Activated CD4-positive, alpha-beta T cell treated with anti-CD3 and anti-CD28 coated beads, Interleukin-2, amount 10 ng/mL, durations not matched to agents 24 days and 14 days (primary cell): ENCODE measurements at regions of chr9 and their contacts with region 1.

Region 1: GRCh38 chr9:2053883-2054845 is 39.0 kb downstream of the SMARCA2 start:
- DNase-seq: peak; percentile 92
- H3K4me3 Mint-ChIP-seq: peak overlapping the region; percentile 61
- H3K27ac Mint-ChIP-seq: peak overlapping the region; percentile 50
- H3K4me1 Mint-ChIP-seq: peaks cover 28% of the 10 kb centered on the region
- H3K27me3 Mint-ChIP-seq: no peaks in the 10 kb centered on the region

Region 2: DNA sequence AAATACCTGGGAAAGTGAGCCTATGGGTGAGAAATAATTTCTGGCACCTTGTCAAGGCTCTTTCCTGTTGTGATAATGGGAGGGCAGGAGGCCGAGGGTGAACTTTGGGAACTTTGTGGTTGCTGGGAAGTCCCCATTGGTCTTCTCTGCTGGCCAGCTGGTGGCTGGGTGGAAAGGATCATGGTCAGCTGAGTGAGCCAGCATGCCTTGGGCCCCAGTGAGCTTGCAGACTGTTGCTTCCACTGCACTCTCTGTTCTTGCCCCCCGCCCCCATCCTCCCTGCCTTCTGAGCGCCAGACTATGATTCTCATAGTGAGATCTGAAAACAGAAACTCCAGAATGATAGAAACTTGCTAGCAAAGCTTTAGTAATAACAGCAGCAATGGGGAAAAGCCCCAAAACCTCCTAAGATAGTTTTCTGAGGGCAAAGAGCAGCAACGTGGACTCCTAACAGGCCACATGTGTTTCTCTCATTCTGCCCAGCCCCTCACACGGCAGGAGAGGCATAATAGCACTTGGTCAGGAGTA is 178.2 kb before region 1 on chr9:
- intact Hi-C with region 1: loop called (anchors 1 kb)
- DNase-seq: peak; percentile 62
- H3K4me3 Mint-ChIP-seq: no peak overlapping the region
- H3K27ac Mint-ChIP-seq: peak overlapping the region; percentile 39
- H3K4me1 Mint-ChIP-seq: peaks cover 12% of the 10 kb centered on the region
- H3K27me3 Mint-ChIP-seq: peaks cover 14% of the 10 kb centered on the region

Region 3: DNA sequence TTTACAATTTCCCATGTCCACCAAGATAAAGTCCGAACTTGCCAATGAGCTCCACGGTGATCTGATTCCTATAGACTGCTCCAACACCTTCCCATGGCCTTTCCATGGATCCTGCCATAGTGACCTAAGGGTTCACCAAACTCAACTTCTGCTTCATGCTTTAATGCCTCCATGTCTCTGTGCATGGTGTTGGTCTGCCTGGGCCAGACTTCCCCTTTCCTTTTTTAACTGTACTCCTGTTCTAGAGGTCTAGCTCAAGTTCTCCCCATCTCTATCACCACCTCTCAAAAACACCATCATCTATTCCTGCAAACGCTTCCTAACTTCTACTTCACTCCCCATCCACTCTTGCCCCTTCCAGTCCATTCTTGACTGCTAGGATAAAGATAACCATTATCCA is 53.9 kb before region 1 on chr9:
- intact Hi-C with region 1: no loop called
- DNase-seq: no peak
- H3K4me3 Mint-ChIP-seq: no peak overlapping the region
- H3K27ac Mint-ChIP-seq: no peak overlapping the region
- H3K4me1 Mint-ChIP-seq: peaks cover 4% of the 10 kb centered on the region
- H3K27me3 Mint-ChIP-seq: peaks cover 35% of the 10 kb centered on the region

Region 4: DNA sequence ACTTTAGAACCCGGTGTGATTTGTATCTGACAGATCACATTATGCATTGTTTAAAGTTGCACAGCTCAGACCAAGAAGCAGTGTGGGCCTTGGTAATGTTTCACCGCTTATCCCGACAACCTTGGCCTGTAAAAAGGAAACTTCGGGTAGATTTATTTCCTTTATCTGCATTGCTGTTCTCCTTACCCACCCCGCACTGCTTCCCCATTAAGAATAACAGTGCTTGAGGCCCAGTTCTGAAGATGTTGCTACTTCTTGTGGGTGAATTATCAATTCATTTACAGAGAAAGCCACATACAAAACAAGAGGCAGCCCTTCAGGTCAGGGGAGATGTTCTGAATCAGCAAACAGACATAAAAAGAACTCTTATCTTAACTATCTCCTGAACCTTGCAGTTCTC is 30.6 kb before region 1 on chr9:
- intact Hi-C with region 1: loop called (anchors 1 kb)
- DNase-seq: peak; percentile 67
- H3K4me3 Mint-ChIP-seq: peak overlapping the region; percentile 78
- H3K27ac Mint-ChIP-seq: peak overlapping the region; percentile 86
- H3K4me1 Mint-ChIP-seq: peaks cover 85% of the 10 kb centered on the region
- H3K27me3 Mint-ChIP-seq: no peaks in the 10 kb centered on the region

Region 5: GRCh38 chr9:2036844-2037590 is 17.1 kb before region 1 on chr9:
- intact Hi-C with region 1: no loop called
- DNase-seq: no peak
- H3K4me3 Mint-ChIP-seq: no peak overlapping the region
- H3K27ac Mint-ChIP-seq: no peak overlapping the region
- H3K4me1 Mint-ChIP-seq: peaks cover 36% of the 10 kb centered on the region
- H3K27me3 Mint-ChIP-seq: no peaks in the 10 kb centered on the region

Region 6: GRCh38 chr9:2066312-2067273 is 12.4 kb after region 1 on chr9:
- intact Hi-C with region 1: loop called (anchors 1 kb)
- DNase-seq: peak; percentile 68
- H3K4me3 Mint-ChIP-seq: no peak overlapping the region
- H3K27ac Mint-ChIP-seq: no peak overlapping the region
- H3K4me1 Mint-ChIP-seq: peaks cover 12% of the 10 kb centered on the region
- H3K27me3 Mint-ChIP-seq: no peaks in the 10 kb centered on the region

Region 7: DNA sequence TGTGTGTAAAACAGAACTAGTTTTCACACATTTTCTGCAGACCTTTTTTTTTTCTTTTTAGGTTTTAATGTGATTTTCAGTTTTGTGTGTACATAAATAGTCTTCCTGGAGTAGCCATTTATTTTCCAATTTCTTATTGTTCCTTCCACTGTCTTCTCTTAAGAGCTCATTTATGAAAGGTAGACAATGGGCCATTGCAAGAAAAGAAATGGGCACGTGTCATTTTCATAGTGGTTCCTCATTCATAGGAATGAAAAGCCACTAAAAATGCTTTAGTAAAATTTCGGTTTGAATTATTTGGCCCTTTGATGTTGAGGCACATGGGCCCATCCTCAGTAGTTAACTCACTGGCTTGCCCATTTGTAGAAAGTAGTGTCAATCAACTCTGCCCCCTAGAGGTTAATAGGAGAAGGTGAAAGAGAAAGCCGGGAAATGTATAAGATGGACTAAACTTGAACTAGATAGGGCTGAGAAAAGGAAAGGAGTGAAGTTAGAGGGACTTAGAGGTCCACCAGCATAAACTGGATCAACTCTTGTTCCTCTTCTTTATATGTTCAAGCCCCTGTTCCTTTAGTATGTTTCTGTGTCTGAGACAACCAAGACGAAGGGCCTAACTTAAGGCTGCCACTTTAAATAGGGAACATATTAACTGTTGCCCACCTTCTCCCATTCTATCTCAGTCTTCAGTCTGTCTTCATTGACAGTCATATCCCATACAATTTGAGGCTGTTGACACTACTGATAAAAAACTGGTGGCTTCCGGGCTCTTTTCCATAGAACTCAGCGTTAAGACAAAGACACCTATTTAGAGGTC is 33.5 kb after region 1 on chr9:
- intact Hi-C with region 1: loop called (anchors 2 kb)
- DNase-seq: peak; percentile 70
- H3K4me3 Mint-ChIP-seq: no peak overlapping the region
- H3K27ac Mint-ChIP-seq: peak overlapping the region; percentile 5
- H3K4me1 Mint-ChIP-seq: peaks cover 13% of the 10 kb centered on the region
- H3K27me3 Mint-ChIP-seq: no peaks in the 10 kb centered on the region

Region 8: DNA sequence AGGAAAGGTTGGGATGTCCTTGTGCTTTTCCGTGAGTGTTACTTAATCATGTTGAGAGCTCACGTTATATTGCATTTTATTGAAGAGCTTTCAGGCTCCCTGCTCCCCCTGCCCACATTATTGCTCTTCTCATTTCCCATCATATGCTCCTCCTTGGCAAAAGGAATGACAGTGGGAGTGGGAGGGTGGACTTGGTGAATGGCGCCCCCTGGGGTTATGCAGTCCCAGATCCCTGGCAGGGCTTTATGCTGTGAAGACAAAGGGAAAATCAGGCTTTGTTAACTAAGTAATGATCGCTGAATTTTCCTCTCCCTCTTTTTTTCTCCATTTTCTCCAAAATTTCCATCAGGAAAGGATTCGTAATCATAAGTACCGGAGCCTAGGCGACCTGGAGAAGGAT is 127.6 kb after region 1 on chr9:
- intact Hi-C with region 1: no loop called
- DNase-seq: peak; percentile 62
- H3K4me3 Mint-ChIP-seq: no peak overlapping the region
- H3K27ac Mint-ChIP-seq: no peak overlapping the region
- H3K4me1 Mint-ChIP-seq: no peaks in the 10 kb centered on the region
- H3K27me3 Mint-ChIP-seq: no peaks in the 10 kb centered on the region